CD8-positive, alpha-beta memory T cell (primary cell): ENCODE measurements at regions of chr1 and their contacts with region 1.

Region 1: DNA sequence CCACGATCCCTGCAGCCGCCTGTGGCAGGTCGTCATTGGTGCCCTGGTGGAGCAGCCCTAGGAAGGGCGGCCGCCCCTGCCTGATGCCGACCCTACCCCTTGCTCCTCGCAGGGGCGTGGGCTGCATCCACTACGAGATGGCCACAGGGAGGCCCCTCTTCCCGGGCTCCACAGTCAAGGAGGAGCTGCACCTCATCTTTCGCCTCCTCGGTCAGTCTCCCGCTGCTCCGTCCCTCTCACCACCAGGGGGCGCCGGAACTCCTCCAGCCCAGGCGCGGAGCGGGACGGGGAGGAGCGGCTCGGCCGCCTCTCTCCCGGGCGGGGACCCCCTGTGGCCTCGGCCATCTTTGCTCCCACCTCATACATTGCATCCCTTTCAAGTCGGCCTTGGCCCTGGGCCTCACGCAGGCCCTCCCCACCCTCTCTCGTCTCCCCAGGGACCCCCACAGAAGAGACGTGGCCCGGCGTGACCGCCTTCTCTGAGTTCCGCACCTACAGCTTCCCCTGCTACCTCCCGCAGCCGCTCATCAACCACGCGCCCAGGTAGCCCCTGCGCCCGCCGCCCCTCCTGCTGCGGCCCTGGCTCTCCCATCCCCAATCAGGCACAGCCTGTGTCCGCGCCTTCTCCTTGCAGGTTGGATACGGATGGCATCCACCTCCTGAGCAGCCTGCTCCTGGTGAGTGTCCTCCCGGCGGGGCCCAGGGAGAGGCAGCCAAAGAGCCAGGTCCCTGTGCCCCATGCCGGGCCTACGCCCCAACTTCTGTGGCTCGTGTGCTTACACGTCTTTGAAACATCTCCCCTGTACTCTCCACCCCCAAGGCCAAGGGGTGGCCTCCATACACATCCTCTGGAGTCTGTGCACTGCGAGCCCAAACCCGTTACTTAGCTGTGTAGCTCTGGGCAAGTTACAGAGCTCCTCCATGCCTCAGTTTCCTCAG is 24.7 kb downstream of the CDK18 start:
- DNase-seq: peak; percentile 64 to 82 (median 75)
- H3K4me3 ChIP-seq: no peak overlapping the region
- H3K4me3 Mint-ChIP-seq: peak overlapping the region in 6 of 7 donors; percentile 34 to 78 (median 44)
- H3K27ac ChIP-seq: no peak overlapping the region
- H3K27ac Mint-ChIP-seq: peak overlapping the region in 1 of 8 donors; percentile 19
- H3K4me1 ChIP-seq: no peaks in the 10 kb centered on the region
- H3K4me1 Mint-ChIP-seq: peaks cover 0 to 7% (median 4%) of the 10 kb centered on the region in 3 donors
- H3K27me3 ChIP-seq: no peaks in the 10 kb centered on the region
- H3K27me3 Mint-ChIP-seq: peaks cover 4 to 8% of the 10 kb centered on the region in 2 donors

Region 2: DNA sequence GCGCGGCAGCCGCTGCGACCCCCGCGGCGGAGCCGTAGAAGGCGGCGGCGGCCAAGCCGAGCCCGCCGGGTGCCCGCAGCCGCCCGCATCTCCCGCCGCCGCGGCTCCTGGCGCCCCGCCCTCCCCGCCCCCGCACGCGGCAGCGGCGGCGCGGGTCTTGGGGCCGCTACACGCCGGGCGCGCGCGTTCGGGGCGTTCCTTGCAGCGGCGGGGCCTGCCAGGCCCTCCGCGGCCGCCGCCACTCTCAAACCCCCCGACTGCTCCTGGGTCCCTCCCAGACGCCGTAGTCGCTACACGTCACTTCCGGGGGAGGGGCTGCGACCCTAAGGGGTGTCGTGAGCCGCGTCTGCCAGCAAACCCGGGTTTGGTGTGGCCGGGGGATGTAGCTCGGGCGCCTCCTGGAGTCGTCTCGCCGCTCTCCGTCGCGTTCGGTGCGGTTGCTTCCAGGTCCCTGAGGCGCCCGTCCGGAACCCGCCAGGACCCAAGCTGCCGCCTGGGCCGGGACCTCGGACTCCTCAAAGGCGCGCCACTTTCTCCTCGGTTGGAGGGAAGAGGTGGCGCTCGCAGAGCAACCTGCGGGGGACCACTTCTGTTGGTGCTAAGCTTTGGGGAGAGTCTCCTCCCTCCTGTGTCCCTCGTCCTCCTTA is 102.7 kb after region 1 on chr1 and contains the start of gene ELK4:
- CTCF ChIA-PET with region 1: interaction called, 11 read pairs
- POLR2A ChIA-PET with region 1: no interaction called
- DNase-seq: peak; percentile 99 to 100 (median 99)
- H3K4me3 ChIP-seq: peak within 1 kb of the TSS; percentile 80
- H3K4me3 Mint-ChIP-seq: peak within 1 kb of the TSS; percentile 88 to 95 (median 91)
- H3K27ac ChIP-seq: peak within 1 kb of the TSS; percentile 89
- H3K27ac Mint-ChIP-seq: peak within 1 kb of the TSS; percentile 90 to 99 (median 98)
- H3K4me1 ChIP-seq: peaks cover 41% of the 10 kb centered on the region
- H3K4me1 Mint-ChIP-seq: peaks cover 39 to 53% (median 46%) of the 10 kb centered on the region in 3 donors
- H3K27me3 ChIP-seq: no peaks in the 10 kb centered on the region
- H3K27me3 Mint-ChIP-seq: peaks cover 0 to 1% of the 10 kb centered on the region in 2 donors
- total RNA-seq, gene ELK4: 83.3 to 88.7 TPM